ENCODE measurements at regions of chr17 and their contacts with region 1.

Region 1: GRCh38 chr17:47941236-47941994 is at the start of gene PNPO:
- DNase-seq: peak; percentile 66 to 96 (median 94)
- ATAC-seq: peak; percentile 99
- H3K4me3 ChIP-seq: peak within 1 kb of the TSS; percentile 75
- H3K4me3 Mint-ChIP-seq: peak within 1 kb of the TSS; percentile 75 to 96 (median 88)
- H3K27ac ChIP-seq: peak within 1 kb of the TSS; percentile 90
- H3K27ac Mint-ChIP-seq: peak within 1 kb of the TSS; percentile 34 to 95 (median 86)
- H3K4me1 ChIP-seq: peaks cover 21 to 33% of the 10 kb centered on the region in 2 donors
- H3K4me1 Mint-ChIP-seq: peaks cover 35 to 63% (median 47%) of the 10 kb centered on the region in 7 donors
- H3K27me3 ChIP-seq: no peaks in the 10 kb centered on the region
- H3K27me3 Mint-ChIP-seq: no peaks in the 10 kb centered on the region
- total RNA-seq, gene PNPO: 12.0 to 35.7 (median 14.1) TPM

Region 2: GRCh38 chr17:47776330-47777197 is 164.9 kb before region 1 on chr17:
- CTCF ChIA-PET with region 1: no interaction called
- POLR2A ChIA-PET with region 1: no interaction called
- intact Hi-C with region 1: no loop called
- DNase-seq: peak in 7 of 9 donors; percentile 17 to 59 (median 41)
- ATAC-seq: peak; percentile 85
- H3K4me3 ChIP-seq: no peak overlapping the region
- H3K4me3 Mint-ChIP-seq: no peak overlapping the region
- H3K27ac ChIP-seq: no peak overlapping the region
- H3K27ac Mint-ChIP-seq: peak overlapping the region in 1 of 9 donors; percentile 38
- H3K4me1 ChIP-seq: no peaks in the 10 kb centered on the region
- H3K4me1 Mint-ChIP-seq: peaks cover 0 to 5% (median 0%) of the 10 kb centered on the region in 7 donors
- H3K27me3 ChIP-seq: peaks cover 0 to 11% of the 10 kb centered on the region in 2 donors
- H3K27me3 Mint-ChIP-seq: peaks cover 35 to 60% (median 45%) of the 10 kb centered on the region in 5 donors

Region 3: GRCh38 chr17:47821424-47822391 is 119.7 kb before region 1 on chr17 and contains the start of gene OSBPL7:
- CTCF ChIA-PET with region 1: no interaction called
- POLR2A ChIA-PET with region 1: interaction called, 4 read pairs
- intact Hi-C with region 1: loop called in 1 of 2 experiments (anchors 5 kb)
- DNase-seq: peak; percentile 44 to 71 (median 66)
- ATAC-seq: peak; percentile 96
- H3K4me3 ChIP-seq: peak within 1 kb of the TSS; percentile 78
- H3K4me3 Mint-ChIP-seq: peak within 1 kb of the TSS; percentile 96 to 99 (median 97)
- H3K27ac ChIP-seq: peak within 1 kb of the TSS; percentile 80
- H3K27ac Mint-ChIP-seq: peak within 1 kb of the TSS; percentile 86 to 96 (median 91)
- H3K4me1 ChIP-seq: peaks cover 5 to 23% of the 10 kb centered on the region in 2 donors
- H3K4me1 Mint-ChIP-seq: peaks cover 7 to 33% (median 24%) of the 10 kb centered on the region in 7 donors
- H3K27me3 ChIP-seq: no peaks in the 10 kb centered on the region
- H3K27me3 Mint-ChIP-seq: no peaks in the 10 kb centered on the region
- total RNA-seq, gene OSBPL7: 36.6 to 46.1 (median 41.4) TPM

Region 4: GRCh38 chr17:47831003-47831933 is 110.1 kb before region 1 on chr17 and contains the starts of genes LRRC46 and MRPL10:
- CTCF ChIA-PET with region 1: no interaction called
- POLR2A ChIA-PET with region 1: no interaction called
- intact Hi-C with region 1: loop called in 1 of 2 experiments (anchors 2 kb)
- DNase-seq: peak; percentile 79 to 96 (median 91)
- ATAC-seq: peak; percentile 88
- H3K4me3 ChIP-seq: peak within 1 kb of the TSS; percentile 99
- H3K4me3 Mint-ChIP-seq: peak within 1 kb of the TSS; percentile 89 to 98 (median 92)
- H3K27ac ChIP-seq: peak within 1 kb of the TSS; percentile 77
- H3K27ac Mint-ChIP-seq: peak within 1 kb of the TSS; percentile 76 to 96 (median 92)
- H3K4me1 ChIP-seq: peaks cover 31 to 38% of the 10 kb centered on the region in 2 donors
- H3K4me1 Mint-ChIP-seq: peaks cover 34 to 79% (median 70%) of the 10 kb centered on the region in 7 donors
- H3K27me3 ChIP-seq: no peaks in the 10 kb centered on the region
- H3K27me3 Mint-ChIP-seq: no peaks in the 10 kb centered on the region
- total RNA-seq, gene LRRC46: 0.20 to 1.7 (median 0.66) TPM
- total RNA-seq, gene MRPL10: 33.6 to 51.2 (median 35.7) TPM

Region 5: GRCh38 chr17:47840740-47841603 is 100.4 kb before region 1 on chr17 and contains the start of gene SCRN2:
- CTCF ChIA-PET with region 1: interaction called, 6 read pairs
- POLR2A ChIA-PET with region 1: no interaction called
- intact Hi-C with region 1: loop called (anchors 2 kb)
- DNase-seq: peak; percentile 71 to 94 (median 81)
- ATAC-seq: peak; percentile 94
- H3K4me3 ChIP-seq: peak within 1 kb of the TSS; percentile 95
- H3K4me3 Mint-ChIP-seq: peak within 1 kb of the TSS; percentile 84 to 99 (median 94)
- H3K27ac ChIP-seq: peak within 1 kb of the TSS; percentile 75
- H3K27ac Mint-ChIP-seq: peak within 1 kb of the TSS; percentile 55 to 93 (median 86)
- H3K4me1 ChIP-seq: peaks cover 19 to 21% of the 10 kb centered on the region in 2 donors
- H3K4me1 Mint-ChIP-seq: peaks cover 9 to 49% (median 38%) of the 10 kb centered on the region in 7 donors
- H3K27me3 ChIP-seq: peaks cover 0 to 7% of the 10 kb centered on the region in 2 donors
- H3K27me3 Mint-ChIP-seq: peaks cover 6 to 23% (median 18%) of the 10 kb centered on the region in 5 donors
- total RNA-seq, gene SCRN2: 33.4 to 55.9 (median 41.4) TPM

Region 6: GRCh38 chr17:47970704-47971463 is 29.5 kb after region 1 on chr17 and contains the start of gene CDK5RAP3:
- CTCF ChIA-PET with region 1: interaction called, 126 read pairs
- POLR2A ChIA-PET with region 1: interaction called, 22 read pairs
- intact Hi-C with region 1: loop called (anchors 1 kb)
- DNase-seq: peak; percentile 93 to 99 (median 97)
- ATAC-seq: peak; percentile 100
- H3K4me3 ChIP-seq: peak within 1 kb of the TSS; percentile 96
- H3K4me3 Mint-ChIP-seq: peak within 1 kb of the TSS; percentile 95 to 100 (median 99)
- H3K27ac ChIP-seq: peak within 1 kb of the TSS; percentile 71
- H3K27ac Mint-ChIP-seq: peak within 1 kb of the TSS; percentile 83 to 96 (median 93)
- H3K4me1 ChIP-seq: peaks cover 6 to 12% of the 10 kb centered on the region in 2 donors
- H3K4me1 Mint-ChIP-seq: peaks cover 14 to 41% (median 26%) of the 10 kb centered on the region in 7 donors
- H3K27me3 ChIP-seq: no peaks in the 10 kb centered on the region
- H3K27me3 Mint-ChIP-seq: no peaks in the 10 kb centered on the region
- total RNA-seq, gene CDK5RAP3: 238 to 349 (median 276) TPM

Region 7: DNA sequence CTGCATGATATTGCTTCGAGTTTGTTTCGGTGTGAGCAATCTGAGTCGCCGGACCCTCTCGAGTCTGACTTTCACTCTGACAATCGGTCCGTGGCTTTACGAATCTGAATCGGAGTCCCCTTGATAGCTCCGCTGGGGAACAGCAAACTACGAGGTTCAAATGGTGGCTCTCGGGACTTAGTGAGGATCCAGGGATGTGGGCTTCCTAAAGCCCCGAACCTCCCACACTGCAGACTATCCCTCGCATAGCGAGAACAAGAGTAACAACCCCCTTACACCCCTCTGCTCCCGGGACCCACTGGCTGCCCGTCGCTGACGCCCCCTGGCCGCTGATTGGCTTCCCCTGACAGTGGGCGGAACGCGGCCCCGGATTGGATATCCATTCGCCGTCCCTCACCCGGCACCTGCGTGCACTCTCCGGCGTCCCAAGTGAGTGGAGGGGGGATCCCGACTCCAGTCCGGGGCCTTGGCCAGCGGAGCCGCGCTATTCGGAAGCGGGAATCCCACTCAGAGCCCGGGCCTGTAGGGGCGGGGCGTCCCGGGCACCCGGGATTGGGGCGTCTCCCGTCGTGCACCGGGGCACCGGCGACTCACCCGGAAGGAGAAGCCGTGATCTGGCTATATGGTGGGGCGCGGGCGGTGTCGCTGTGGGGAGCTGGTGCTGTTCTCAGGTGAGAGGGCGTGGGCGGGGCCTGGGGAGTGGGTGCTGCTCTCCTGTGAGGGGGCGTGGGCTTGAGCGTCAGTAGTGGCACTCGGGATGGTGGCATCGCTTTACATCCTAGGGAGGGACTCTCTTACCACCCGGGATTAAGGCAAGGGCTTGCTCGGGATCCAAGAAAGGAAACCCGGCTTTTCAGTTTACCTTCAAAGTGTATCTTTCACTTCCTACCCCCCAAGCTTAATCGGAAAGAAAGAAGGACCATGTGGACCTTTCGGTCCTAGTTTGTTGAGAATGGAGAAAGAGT is 166.0 kb after region 1 on chr17 and contains the start of gene SNX11:
- CTCF ChIA-PET with region 1: no interaction called
- POLR2A ChIA-PET with region 1: interaction called, 5 read pairs
- intact Hi-C with region 1: loop called in 1 of 2 experiments (anchors 10 kb)
- DNase-seq: peak; percentile 85 to 97 (median 94)
- ATAC-seq: peak; percentile 96
- H3K4me3 ChIP-seq: peak within 1 kb of the TSS; percentile 97
- H3K4me3 Mint-ChIP-seq: peak within 1 kb of the TSS; percentile 92 to 99 (median 96)
- H3K27ac ChIP-seq: peak within 1 kb of the TSS; percentile 89
- H3K27ac Mint-ChIP-seq: peak within 1 kb of the TSS; percentile 89 to 96 (median 93)
- H3K4me1 ChIP-seq: peaks cover 19 to 20% of the 10 kb centered on the region in 2 donors
- H3K4me1 Mint-ChIP-seq: peaks cover 45 to 68% (median 62%) of the 10 kb centered on the region in 7 donors
- H3K27me3 ChIP-seq: no peaks in the 10 kb centered on the region
- H3K27me3 Mint-ChIP-seq: no peaks in the 10 kb centered on the region
- total RNA-seq, gene SNX11: 12.3 to 35.1 (median 16.7) TPM

Region 8: GRCh38 chr17:48618256-48618897 is 677.0 kb after region 1 on chr17:
- CTCF ChIA-PET with region 1: no interaction called
- POLR2A ChIA-PET with region 1: no interaction called
- intact Hi-C with region 1: loop called in 1 of 2 experiments (anchors 10 kb)
- DNase-seq: peak; percentile 62 to 86 (median 74)
- ATAC-seq: peak; percentile 90
- H3K4me3 ChIP-seq: no peak overlapping the region
- H3K4me3 Mint-ChIP-seq: peak overlapping the region in 9 of 10 donors; percentile 12 to 53 (median 40)
- H3K27ac ChIP-seq: no peak overlapping the region
- H3K27ac Mint-ChIP-seq: peak overlapping the region in 3 of 9 donors; percentile 74 to 83 (median 81)
- H3K4me1 ChIP-seq: peaks cover 19 to 23% of the 10 kb centered on the region in 2 donors
- H3K4me1 Mint-ChIP-seq: peaks cover 26 to 49% (median 36%) of the 10 kb centered on the region in 7 donors
- H3K27me3 ChIP-seq: peaks cover 35 to 59% of the 10 kb centered on the region in 2 donors
- H3K27me3 Mint-ChIP-seq: peaks cover 90 to 97% (median 92%) of the 10 kb centered on the region in 5 donors

Measured in naive thymus-derived CD4-positive, alpha-beta T cell (primary cell).